BJ (cell line): ENCODE measurements at regions of chr1 and their contacts with region 1.

Region 1: DNA sequence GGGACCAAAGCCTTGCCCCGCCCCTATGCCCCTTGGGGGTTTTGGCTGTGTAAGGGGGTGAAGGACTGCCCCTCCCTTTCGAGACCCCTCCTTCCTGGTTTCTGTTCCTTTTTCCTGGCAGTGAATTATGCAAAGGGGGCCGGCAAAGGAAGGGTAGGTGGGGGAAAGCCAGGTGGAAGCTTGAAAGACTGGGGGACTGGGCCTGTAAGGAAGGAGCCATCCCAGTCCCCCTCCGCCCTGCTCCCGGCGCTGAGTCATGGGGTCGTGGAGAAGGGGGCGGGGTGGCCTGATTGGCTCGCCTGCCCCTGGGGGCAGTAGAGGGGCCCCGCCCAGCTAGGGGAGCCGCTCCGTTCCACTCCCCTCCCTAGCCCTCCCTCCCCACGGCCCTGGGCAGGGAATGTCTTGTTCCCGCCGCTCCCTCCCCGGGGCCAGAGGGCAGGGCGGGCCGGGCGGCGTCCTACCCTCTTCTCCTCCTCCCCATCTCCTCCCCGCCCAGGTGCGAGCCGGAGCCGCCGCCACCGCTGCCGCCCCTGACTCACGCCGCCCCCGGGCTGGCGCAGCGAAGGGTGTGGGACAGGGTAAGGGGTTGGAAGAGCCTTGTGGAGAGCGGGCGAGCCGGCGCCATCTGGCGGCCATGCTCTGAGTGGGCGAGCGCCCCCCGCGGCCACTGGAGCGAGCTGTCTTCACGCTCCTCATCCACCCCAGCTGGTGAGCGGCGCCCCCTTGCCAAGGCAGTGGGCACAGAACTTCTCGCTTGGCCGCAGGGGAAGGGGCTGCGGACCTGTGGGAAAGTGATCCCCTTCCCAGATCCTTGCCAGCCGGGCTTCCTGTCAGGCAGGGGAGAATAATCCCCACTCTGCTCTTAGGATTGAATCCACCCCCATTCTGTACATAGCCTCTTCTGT is 14.7 kb downstream of the ZBTB7B start:
- DNase-seq: peak; percentile 55
- H3K4me3 ChIP-seq: peak overlapping the region; percentile 40
- H3K27me3 ChIP-seq: no peaks in the 10 kb centered on the region
- CTCF ChIP-seq: peak; percentile 99

Region 2: DNA sequence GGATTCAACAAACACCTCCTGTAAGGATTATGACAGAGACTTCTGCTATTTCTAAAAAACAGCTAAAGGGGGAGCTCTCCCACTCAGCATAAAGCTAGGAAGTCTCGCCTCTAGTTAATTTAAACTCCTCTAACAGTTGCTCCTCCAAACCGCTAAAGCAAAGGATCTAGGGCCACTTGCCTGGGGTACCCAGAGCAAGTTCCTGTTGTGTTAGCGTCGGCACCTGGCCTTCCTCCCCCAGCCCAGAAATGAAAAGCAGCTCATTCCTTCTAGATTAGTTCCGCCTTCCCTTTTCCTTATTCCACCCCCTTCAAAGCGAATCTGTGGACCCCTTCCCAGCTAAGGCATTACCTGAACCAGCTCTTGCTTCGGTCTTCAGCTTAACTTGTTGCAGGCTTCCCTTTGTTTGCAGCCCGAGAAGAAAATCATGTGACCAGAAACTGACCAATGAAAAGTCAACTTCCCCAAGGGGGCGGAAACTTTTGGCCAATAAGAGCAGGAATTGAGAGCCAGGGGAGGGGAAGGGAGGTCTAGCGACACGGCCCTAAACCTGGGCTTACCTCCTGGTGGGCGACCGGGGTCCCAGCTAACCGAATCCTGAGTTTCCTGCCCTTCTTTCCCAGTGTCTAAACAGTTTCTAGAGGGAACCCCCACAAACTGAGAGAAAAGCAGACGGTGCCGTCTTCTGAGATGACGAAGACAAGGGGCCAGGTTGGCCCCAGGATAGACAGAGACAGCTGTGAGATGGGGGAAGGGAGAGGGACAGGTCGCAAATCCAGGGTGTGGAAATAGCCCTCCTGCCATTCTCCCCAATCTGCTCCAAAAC is 61.4 kb before region 1 on chr1 and contains the start of gene PBXIP1:
- CTCF ChIA-PET with region 1: interaction called, 29 read pairs
- POLR2A ChIA-PET with region 1: no interaction called
- DNase-seq: peak; percentile 80
- H3K4me3 ChIP-seq: peak within 1 kb of the TSS; percentile 52
- H3K27me3 ChIP-seq: no peaks in the 10 kb centered on the region
- CTCF ChIP-seq: peak; percentile 47
- polyA plus RNA-seq, gene PBXIP1: 65.6 and 83.1 TPM in 2 replicates

Region 3: GRCh38 chr1:154974063-154974807 is 43.1 kb before region 1 on chr1 and contains the start of gene CKS1B:
- CTCF ChIA-PET with region 1: interaction called, 14 read pairs
- POLR2A ChIA-PET with region 1: no interaction called
- DNase-seq: peak; percentile 99
- H3K4me3 ChIP-seq: peak within 1 kb of the TSS; percentile 70
- H3K27me3 ChIP-seq: no peaks in the 10 kb centered on the region
- CTCF ChIP-seq: no peak
- polyA plus RNA-seq, gene CKS1B: 111 and 160 TPM in 2 replicates

Region 4: GRCh38 chr1:155029513-155030242 is 12.4 kb after region 1 on chr1:
- CTCF ChIA-PET with region 1: interaction called, 11 read pairs
- POLR2A ChIA-PET with region 1: no interaction called
- DNase-seq: no peak
- H3K4me3 ChIP-seq: no peak overlapping the region
- H3K27me3 ChIP-seq: 0 out of 2 replicates have a peak, but pooled peaks cover 1% of the 10 kb centered on the region
- CTCF ChIP-seq: no peak

Region 5: DNA sequence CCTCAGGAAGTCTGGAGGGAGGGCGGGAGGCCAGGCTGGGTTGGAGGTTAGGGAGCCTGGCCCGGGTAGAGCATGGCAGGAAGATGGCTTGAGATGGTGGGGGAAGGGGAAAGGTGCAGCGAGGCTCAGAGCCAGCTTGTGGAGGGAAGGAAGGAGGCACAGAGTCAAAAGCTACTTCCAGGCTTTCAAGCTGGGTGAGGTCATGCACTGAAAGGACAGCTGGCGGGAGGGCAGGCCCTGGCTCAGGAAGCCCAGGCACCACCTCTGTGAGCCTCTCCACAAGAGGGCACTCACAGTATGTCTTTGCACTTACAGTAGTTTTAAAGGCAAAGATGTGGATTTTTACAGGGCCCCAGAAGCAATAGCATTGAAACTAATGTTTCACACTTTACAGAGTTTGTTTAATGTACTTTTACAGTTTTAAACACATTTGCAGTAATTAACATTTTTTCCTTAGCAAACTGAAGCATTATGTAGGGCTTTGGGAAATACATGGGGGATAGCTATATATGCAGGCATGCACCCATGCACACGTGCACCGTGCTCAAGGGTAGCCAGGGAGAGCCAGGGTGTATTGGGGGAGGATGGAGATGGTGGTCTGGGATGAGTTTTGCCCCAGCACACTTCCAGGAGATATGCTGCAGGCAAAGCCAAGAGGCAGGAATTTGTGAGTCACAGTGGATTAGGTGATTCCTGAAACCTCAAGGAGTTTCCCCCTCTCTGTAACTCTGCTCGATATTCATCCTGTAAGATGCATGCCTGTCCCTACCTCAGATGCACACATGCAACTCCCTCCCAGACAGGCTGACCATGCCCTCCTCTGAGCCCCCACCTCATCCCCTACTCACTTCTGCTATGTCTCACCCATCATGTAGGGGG is 27.8 kb after region 1 on chr1:
- CTCF ChIA-PET with region 1: interaction called, 55 read pairs
- POLR2A ChIA-PET with region 1: no interaction called
- DNase-seq: no peak
- H3K4me3 ChIP-seq: no peak overlapping the region
- H3K27me3 ChIP-seq: no peaks in the 10 kb centered on the region; the same call in 1 of the 2 replicates
- CTCF ChIP-seq: peak; percentile 83

Region 6: DNA sequence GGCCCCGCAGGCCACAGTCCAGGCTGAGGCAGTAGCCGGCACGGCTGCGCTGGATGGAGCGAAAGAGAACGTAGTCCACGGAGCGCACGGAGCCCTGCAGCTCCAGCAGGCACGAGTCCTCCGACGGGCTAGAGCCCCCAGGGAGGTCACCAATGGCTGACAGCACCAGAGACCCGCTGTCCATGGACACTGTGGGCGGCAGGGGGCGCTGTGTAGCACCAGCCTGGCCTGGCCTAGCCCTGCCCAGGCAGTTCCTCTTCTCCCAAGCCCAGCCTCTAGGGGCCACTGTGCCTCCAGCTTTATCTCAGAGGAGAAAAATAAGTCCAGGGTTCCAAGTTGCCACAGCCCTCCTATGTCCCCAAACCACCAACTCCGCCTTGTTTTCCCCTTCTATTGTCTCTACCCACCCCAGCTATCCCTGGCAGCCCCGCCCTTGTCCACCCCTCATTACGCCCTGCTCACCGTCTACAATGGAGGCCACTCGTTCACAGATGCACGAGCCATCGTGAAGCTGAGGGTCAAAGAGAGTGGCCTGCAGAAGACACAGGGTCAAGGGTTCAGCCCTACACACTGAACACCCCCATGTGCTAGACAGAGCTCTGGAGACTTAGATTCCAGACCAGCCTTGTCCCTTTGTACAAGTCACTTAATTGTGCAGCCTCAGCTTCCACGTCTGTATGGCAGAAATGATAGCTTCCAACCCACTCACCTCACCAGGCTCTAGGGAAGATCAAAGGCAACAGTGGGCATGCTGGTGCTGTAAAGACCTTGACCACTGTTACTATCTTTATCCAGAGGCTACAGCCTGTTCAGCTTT is 233.5 kb after region 1 on chr1:
- CTCF ChIA-PET with region 1: no interaction called
- POLR2A ChIA-PET with region 1: no interaction called
- DNase-seq: no peak
- H3K4me3 ChIP-seq: no peak overlapping the region
- H3K27me3 ChIP-seq: no peaks in the 10 kb centered on the region
- CTCF ChIP-seq: peak; percentile 100